ENCODE measurements at regions of chr6 and their contacts with region 1.

Region 1: DNA sequence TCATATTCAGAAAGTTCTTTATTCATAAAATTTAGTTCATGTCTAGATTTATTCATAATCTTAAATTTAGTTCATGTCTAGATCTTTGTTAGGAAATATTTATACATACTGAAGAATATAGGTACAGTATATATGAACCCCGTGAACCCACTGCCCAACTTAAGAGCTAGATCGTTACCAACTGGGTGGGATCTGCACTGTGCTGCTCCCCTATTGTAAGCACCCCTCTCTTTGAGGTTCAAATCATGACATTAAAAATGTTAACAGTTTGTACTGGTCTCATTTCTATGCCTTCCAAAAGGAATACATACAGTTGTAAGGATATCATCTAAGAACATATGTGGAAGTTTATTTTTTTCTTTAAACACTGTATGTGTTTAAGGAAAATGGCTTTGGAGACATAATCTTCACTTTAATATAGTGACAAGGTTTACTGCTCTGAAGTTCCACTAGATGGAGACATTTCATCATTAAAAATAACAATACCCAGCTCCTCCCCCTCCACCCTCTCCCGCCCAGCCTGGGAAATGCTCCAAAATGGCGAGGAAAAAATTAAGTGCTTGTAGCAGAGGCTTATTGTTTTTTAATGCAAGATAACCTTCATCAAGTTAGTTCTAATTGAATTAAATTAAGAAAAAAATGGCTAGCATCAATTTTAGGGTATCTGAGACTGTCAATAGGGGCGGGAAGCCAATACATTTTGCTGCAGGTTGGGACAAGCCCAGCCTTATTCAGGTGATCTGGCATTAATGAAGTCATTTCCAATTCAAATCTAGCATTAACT is 104.1 kb upstream of the TRAF3IP2 start:
- DNase-seq: peak; percentile 76
- ATAC-seq: peak; percentile 83

Region 2: DNA sequence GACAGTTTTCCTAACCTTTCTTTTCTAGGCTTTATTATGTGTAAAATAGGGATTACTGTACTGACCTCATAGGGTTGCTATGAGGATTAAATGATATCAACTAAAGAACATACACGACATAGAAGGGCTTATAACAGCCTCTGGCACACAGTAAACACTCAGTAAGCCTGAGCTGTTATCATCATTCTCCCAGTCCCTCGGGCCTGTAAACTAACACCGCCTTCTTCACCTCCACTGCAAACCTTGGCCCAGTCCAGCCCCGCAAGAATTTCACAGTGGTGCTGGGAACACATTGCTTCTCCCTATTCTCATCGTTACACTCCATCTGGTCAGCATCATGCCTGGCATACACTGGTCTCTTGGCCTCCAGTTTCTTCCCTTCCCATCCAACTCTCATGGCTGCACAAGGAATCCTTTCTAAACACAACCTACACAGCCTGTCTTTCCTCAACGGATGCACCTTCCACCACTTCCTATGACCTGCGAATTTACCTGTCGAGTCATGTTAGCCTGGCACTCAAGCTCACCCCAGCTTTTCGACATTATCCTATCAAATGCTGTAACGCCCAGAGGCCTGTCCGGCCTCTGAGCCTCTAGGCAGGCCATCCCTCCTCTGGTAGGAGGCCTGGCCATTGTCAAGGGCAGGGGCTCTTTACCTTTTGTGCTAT is 71.4 kb after region 1 on chr6:
- intact Hi-C with region 1: loop called (anchors 5 kb)
- DNase-seq: no peak
- ATAC-seq: peak; percentile 76

Region 3: DNA sequence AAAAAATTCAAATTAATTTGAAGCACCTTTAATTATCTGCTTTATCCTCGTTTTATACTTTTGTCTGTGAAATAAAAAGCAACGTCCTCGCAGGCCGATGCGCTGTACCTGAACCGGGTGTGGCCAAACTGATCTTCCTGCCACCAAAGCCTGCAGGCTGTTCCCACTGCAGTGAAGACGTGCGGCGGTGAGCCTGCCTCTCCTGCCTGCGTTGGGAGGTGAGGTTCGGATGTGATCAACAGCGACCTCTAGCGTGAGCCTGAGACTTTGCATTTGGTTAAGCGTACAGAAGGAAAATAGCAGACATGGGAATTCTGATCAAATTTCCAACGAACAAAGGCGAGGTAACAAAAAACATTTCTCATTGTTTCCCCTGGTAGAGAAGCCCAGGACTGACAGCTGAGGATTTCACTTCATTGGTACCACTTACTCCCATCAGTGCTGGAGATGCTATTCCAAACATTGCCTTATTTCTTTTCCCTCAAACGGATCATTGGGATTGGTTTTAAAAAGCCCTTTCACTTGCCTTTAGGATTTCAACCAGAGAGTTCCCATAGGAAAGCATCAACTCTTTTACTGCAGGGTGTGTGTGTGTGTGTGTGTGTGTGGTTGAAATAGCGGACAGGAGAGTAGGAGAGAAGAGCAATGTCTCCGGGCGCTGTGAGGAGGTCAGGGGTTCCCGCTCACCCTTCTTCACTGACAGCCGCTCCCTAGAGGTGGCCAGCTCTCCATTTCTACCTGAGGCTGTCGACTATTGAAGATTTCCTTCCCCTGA is 287.5 kb after region 1 on chr6:
- intact Hi-C with region 1: loop called (anchors 1 kb)
- DNase-seq: peak; percentile 88
- ATAC-seq: peak; percentile 91

Region 4: GRCh38 chr6:112043032-112044007 is 333.5 kb after region 1 on chr6:
- intact Hi-C with region 1: loop called (anchors 1 kb)
- DNase-seq: peak; percentile 92
- ATAC-seq: peak; percentile 95